H1 (cell line): ENCODE measurements at regions of chr5 and their contacts with region 1.

Region 1: GRCh38 chr5:41510176-41510831 is at the start of gene PLCXD3:
- DNase-seq: peak in 1 of 2 experiments; percentile 63
- H3K4me3 ChIP-seq: peak within 1 kb of the TSS; percentile 58 to 68 (median 63)
- H3K27ac ChIP-seq: no peak within 1 kb of the TSS
- H3K4me1 ChIP-seq: peaks cover 0 to 10% (median 3%) of the 10 kb centered on the region in 4 experiments; a peak in 4 of 7 replicates
- H3K27me3 ChIP-seq: peaks cover 7 to 27% (median 24%) of the 10 kb centered on the region in 4 experiments
- CTCF ChIP-seq: no peak
- EP300 ChIP-seq: no peak
- POLR2A ChIP-seq: no peak
- RAD21 ChIP-seq: no peak
- total RNA-seq, gene PLCXD3: 0.07 and 0.10 TPM in 2 replicates

Region 2: GRCh38 chr5:41425736-41426135 is 84.6 kb before region 1 on chr5:
- CTCF ChIA-PET with region 1: no interaction called
- POLR2A ChIA-PET with region 1: no interaction called
- DNase-seq: no peak
- H3K4me3 ChIP-seq: no peak overlapping the region
- H3K27ac ChIP-seq: no peak overlapping the region
- H3K4me1 ChIP-seq: peaks cover 0 to 3% (median 0%) of the 10 kb centered on the region in 4 experiments; a peak in 1 of 7 replicates
- H3K27me3 ChIP-seq: no peaks in the 10 kb centered on the region
- CTCF ChIP-seq: no peak
- EP300 ChIP-seq: no peak
- POLR2A ChIP-seq: no peak
- RAD21 ChIP-seq: no peak

Region 3: GRCh38 chr5:41524174-41524573 is 13.9 kb after region 1 on chr5:
- CTCF ChIA-PET with region 1: interaction called, 19 read pairs
- POLR2A ChIA-PET with region 1: no interaction called
- DNase-seq: no peak
- H3K4me3 ChIP-seq: no peak overlapping the region
- H3K27ac ChIP-seq: no peak overlapping the region
- H3K4me1 ChIP-seq: no peaks in the 10 kb centered on the region
- H3K27me3 ChIP-seq: no peaks in the 10 kb centered on the region
- CTCF ChIP-seq: peak in 2 of 3 experiments; percentile 58 to 65; a peak in 3 of 4 replicates
- EP300 ChIP-seq: no peak
- POLR2A ChIP-seq: no peak
- RAD21 ChIP-seq: peak; percentile 79 to 84

Region 4: GRCh38 chr5:41587668-41588067 is 77.4 kb after region 1 on chr5:
- CTCF ChIA-PET with region 1: no interaction called
- POLR2A ChIA-PET with region 1: no interaction called
- DNase-seq: no peak
- H3K4me3 ChIP-seq: no peak overlapping the region
- H3K27ac ChIP-seq: no peak overlapping the region
- H3K4me1 ChIP-seq: no peaks in the 10 kb centered on the region
- H3K27me3 ChIP-seq: no peaks in the 10 kb centered on the region
- CTCF ChIP-seq: no peak
- EP300 ChIP-seq: no peak
- POLR2A ChIP-seq: no peak
- RAD21 ChIP-seq: no peak